Ascending aorta (tissue), 2 donors: ENCODE measurements at regions of chr5 and their contacts with region 1.

Region 1: GRCh38 chr5:179732417-179732917 is at the start of gene MAML1:
- DNase-seq: peak; percentile 99 to 100
- H3K4me3 ChIP-seq: peak within 1 kb of the TSS; percentile 92 to 93
- H3K27ac ChIP-seq: peak within 1 kb of the TSS; percentile 88 to 91
- H3K4me1 ChIP-seq: peaks cover 10 to 33% of the 10 kb centered on the region in 2 donors
- H3K27me3 ChIP-seq: no peaks in the 10 kb centered on the region
- CTCF ChIP-seq: no peak
- total RNA-seq, gene MAML1: 42.6 TPM

Region 2: DNA sequence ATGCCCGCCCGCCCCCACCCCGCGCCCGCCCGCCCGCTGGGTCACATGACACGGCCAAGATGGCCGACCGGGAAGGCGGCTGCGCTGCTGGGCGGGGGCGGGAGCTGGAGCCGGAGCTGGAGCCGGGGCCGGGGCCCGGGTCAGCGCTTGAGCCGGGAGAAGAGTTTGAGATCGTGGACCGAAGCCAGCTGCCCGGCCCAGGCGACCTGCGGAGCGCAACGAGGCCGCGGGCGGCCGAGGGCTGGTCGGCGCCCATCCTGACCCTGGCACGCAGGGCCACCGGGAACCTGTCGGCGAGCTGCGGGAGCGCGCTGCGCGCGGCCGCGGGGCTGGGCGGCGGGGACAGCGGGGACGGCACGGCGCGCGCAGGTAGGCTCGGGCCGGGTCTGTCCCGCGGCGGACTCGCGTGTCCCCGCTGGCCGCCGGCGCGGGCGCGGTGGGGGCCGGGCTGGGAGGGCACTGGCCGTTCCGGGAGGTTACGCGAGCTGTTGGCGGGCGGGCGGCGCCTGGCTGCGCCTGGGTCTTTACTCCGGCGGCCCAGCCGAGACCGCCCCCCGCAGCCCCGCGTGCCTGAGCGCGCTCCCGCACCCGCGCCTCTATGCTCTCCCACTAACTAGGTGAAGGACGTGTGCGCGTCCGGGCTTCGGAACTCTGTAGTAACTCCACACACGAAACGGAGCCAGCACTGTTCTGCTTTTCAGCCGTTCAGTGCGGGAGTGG is 181.8 kb before region 1 on chr5 and contains the start of gene RUFY1:
- intact Hi-C with region 1: loop called (anchors 5 kb)
- DNase-seq: peak; percentile 24 to 85
- H3K4me3 ChIP-seq: peak within 1 kb of the TSS; percentile 84 to 95
- H3K27ac ChIP-seq: peak within 1 kb of the TSS; percentile 92 to 98
- H3K4me1 ChIP-seq: peaks cover 6 to 19% of the 10 kb centered on the region in 2 donors
- H3K27me3 ChIP-seq: no peaks in the 10 kb centered on the region
- CTCF ChIP-seq: peak in 1 of 3 experiments; percentile 33
- total RNA-seq, gene RUFY1: 12.2 TPM

Region 3: DNA sequence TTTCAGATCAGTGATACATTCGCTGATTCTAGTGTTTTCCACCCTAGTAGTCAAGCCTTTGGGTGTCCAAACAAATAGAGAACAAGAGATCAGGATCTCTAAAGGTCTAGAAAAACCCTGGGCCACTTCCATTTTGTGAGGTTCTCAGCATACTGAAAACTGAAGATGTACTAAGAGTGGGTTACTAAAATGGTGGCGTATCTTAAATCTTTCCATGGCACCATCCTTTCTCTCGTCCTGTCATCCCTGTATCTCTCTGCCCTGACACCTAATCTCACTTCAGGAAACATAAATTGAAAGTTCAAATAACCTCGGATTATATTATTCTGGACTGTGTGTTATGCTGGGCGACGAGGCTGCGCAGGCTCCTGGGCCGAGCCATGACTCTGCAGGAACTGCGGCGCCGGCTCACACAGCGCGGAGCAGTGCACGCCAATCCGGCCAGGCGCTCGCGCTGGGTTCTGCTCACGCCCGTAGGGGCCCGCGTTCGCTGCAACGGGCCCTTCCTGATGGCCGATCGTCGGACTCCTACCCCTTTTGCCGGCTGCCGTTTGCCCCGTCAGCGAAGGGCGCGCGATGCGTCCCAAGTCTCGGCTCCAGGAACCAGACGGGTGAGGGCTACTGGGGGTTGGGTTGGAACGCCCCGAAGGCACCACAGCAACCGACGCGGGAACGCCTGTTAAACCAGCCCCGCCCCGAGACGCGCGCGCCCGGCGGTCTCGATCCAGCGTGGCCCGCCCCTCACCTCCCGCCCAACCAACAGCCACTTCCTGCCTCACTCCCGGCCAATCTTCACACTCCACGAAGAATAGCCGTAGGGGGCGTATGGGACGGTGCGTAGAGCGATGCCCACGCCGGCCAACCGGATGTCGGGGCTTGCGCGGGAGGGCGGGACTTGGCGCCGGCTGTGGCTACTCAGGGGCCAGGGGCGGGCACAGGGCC is 34.2 kb before region 1 on chr5:
- intact Hi-C with region 1: loop called (anchors 1 kb)
- DNase-seq: peak; percentile 98 to 100
- H3K4me3 ChIP-seq: peak overlapping the region; percentile 90 to 94
- H3K27ac ChIP-seq: peak overlapping the region; percentile 98 to 99
- H3K4me1 ChIP-seq: peaks cover 0 to 11% of the 10 kb centered on the region in 2 donors
- H3K27me3 ChIP-seq: no peaks in the 10 kb centered on the region
- CTCF ChIP-seq: no peak

Region 4: DNA sequence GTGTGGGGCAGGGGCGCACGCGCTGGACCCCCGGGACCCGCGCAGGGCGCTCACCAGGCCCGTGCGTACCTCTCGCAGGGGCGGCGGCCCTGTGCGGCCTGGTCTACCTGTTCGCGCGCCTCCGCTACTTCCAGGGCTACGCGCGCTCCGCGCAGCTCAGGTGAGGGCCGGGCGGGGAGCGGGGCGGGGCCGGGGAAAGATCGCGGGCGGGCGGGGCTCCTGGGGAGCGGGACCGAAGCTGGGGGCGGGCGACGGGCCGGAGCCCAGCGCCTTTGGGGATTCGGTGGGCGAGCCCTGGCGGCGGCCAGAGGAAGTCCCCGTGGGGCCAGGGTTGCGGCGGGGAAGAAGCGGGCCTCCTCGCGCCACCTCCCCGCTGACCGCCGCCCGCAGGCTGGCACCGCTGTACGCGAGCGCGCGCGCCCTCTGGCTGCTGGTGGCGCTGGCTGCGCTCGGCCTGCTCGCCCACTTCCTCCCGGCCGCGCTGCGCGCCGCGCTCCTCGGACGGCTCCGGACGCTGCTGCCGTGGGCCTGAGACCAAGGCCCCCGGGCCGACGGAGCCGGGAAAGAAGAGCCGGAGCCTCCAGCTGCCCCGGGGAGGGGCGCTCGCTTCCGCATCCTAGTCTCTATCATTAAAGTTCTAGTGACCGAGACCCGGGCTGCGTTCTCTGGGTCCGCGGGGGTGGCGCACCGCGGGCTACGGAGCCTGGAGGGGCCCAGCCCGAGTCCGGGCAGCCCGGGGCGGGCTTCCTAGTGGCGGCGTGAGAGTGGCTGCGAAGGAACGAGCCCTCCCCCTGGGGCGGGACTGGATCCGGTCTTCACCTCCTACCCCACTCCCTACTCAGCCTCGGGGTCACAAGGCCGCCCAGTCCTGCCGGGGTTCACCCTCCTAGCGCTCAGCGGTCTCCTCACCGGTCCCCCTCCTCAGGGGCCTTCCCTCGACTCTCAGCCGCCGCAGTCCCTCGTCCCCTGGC is 63.7 kb after region 1 on chr5:
- intact Hi-C with region 1: loop called (anchors 1 kb)
- DNase-seq: peak in 1 of 2 donors; percentile 89
- H3K4me3 ChIP-seq: peak overlapping the region; percentile 68 to 75
- H3K27ac ChIP-seq: peak overlapping the region; percentile 75 to 79
- H3K4me1 ChIP-seq: peaks cover 12 to 29% of the 10 kb centered on the region in 2 donors
- H3K27me3 ChIP-seq: no peaks in the 10 kb centered on the region
- CTCF ChIP-seq: peak; percentile 25 to 90 (median 71)

Region 5: DNA sequence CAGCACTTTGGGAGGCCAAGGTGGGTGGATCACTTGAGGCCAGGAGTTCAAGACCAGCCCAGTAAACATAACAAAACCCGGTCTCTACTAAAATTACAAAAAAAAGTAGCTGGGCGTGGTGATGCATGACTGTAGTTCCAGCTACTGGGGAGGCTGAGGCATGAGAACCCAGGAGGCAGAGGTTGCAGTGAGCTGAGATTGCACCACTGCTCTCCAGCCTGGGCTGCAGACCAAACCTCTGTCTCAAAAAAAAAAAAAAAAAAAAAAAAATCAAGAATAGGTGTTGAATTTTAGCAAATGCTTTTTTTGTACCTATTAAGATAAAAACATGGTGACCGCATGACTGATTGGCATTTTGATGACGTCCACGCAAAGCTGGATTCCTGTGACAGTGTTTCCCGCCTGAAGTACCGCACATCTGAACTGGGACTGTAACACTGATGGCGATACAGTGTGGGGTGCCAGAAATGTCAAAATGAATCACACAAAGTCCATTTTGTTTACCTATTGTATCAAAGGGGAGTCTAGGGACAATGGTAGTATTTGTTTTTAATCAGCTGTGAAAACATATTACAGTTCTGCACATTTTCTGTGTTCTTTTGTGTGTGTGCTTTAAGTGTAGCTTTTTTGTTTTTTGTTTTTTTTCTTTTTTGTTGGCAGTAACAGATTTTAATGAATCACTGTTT is 198.5 kb after region 1 on chr5:
- intact Hi-C with region 1: no loop called
- DNase-seq: no peak
- H3K4me3 ChIP-seq: no peak overlapping the region
- H3K27ac ChIP-seq: no peak overlapping the region
- H3K4me1 ChIP-seq: no peaks in the 10 kb centered on the region
- H3K27me3 ChIP-seq: no peaks in the 10 kb centered on the region
- CTCF ChIP-seq: no peak